Heart right ventricle (tissue), 16 donors: ENCODE measurements at regions of chr2 and their contacts with region 1.

Region 1: GRCh38 chr2:202911512-202912341 is at the starts of genes CARF and WDR12:
- DNase-seq: peak; percentile 91 to 95
- ATAC-seq: peak; percentile 98 to 99 (median 98)
- H3K4me3 ChIP-seq: peak within 1 kb of the TSS; percentile 48 to 88 (median 78)
- H3K27ac ChIP-seq: peak within 1 kb of the TSS; percentile 68 to 95 (median 90)
- H3K4me1 ChIP-seq: peaks cover 2 to 29% (median 18%) of the 10 kb centered on the region in 9 donors
- H3K27me3 ChIP-seq: no peaks in the 10 kb centered on the region
- CTCF ChIP-seq: no peak
- total RNA-seq, gene CARF: 5.0 to 10.2 (median 8.4) TPM
- total RNA-seq, gene WDR12: 32.1 to 52.6 (median 45.8) TPM

Region 2: GRCh38 chr2:202373490-202373889 is 538.2 kb before region 1 on chr2:
- intact Hi-C with region 1: no loop called
- DNase-seq: no peak
- ATAC-seq: no peak
- H3K4me3 ChIP-seq: no peak overlapping the region
- H3K27ac ChIP-seq: no peak overlapping the region
- H3K4me1 ChIP-seq: peaks cover 0 to 17% (median 7%) of the 10 kb centered on the region in 9 donors
- H3K27me3 ChIP-seq: peaks cover 0 to 5% (median 0%) of the 10 kb centered on the region in 7 donors
- CTCF ChIP-seq: no peak

Region 3: GRCh38 chr2:203014456-203015199 is 102.9 kb after region 1 on chr2 and contains the start of gene NBEAL1:
- intact Hi-C with region 1: loop called in 2 of 10 experiments (anchors 5 to 10 kb)
- DNase-seq: peak; percentile 97 to 99
- ATAC-seq: peak; percentile 97 to 99 (median 98)
- H3K4me3 ChIP-seq: peak within 1 kb of the TSS; percentile 69 to 93 (median 86)
- H3K27ac ChIP-seq: peak within 1 kb of the TSS; percentile 91 to 98 (median 93)
- H3K4me1 ChIP-seq: peaks cover 0 to 50% (median 35%) of the 10 kb centered on the region in 9 donors
- H3K27me3 ChIP-seq: no peaks in the 10 kb centered on the region
- CTCF ChIP-seq: no peak
- total RNA-seq, gene NBEAL1: 13.4 to 24.5 (median 18.4) TPM

Region 4: GRCh38 chr2:203238704-203239526 is 327.2 kb after region 1 on chr2 and contains the start of gene CYP20A1:
- intact Hi-C with region 1: loop called in 1 of 10 experiments (anchors 2 kb)
- DNase-seq: peak; percentile 96 to 97
- ATAC-seq: peak; percentile 97 to 99 (median 98)
- H3K4me3 ChIP-seq: peak within 1 kb of the TSS; percentile 51 to 95 (median 77)
- H3K27ac ChIP-seq: peak within 1 kb of the TSS; percentile 67 to 98 (median 96)
- H3K4me1 ChIP-seq: peaks cover 0 to 27% (median 16%) of the 10 kb centered on the region in 9 donors
- H3K27me3 ChIP-seq: no peaks in the 10 kb centered on the region
- CTCF ChIP-seq: peak in 7 of 9 donors; percentile 24 to 63 (median 48)
- total RNA-seq, gene CYP20A1: 8.9 to 15.4 (median 10.9) TPM